Activated T-helper 1 cell treated with anti-CD3 and anti-CD28 coated beads, Interleukin-12 subunit alpha, Interleukin-12 subunit beta, Interleukin-2, Interleukin-4 antibody, amounts not matched to agents 30 ng/mL and 10 ng/mL and 1 ng/mL, durations not matched to agents 14 hours and 24 hours and 36 hours (primary cell): ENCODE measurements at regions of chr6 and their contacts with region 1.

Region 1: GRCh38 chr6:106444777-106445507 is 84.4 kb downstream of the CRYBG1 start:
- DNase-seq: peak; percentile 16
- H3K4me3 Mint-ChIP-seq: no peak overlapping the region
- H3K27ac Mint-ChIP-seq: no peak overlapping the region
- H3K4me1 Mint-ChIP-seq: peaks cover 20% of the 10 kb centered on the region
- H3K27me3 Mint-ChIP-seq: peaks cover 20% of the 10 kb centered on the region

Region 2: DNA sequence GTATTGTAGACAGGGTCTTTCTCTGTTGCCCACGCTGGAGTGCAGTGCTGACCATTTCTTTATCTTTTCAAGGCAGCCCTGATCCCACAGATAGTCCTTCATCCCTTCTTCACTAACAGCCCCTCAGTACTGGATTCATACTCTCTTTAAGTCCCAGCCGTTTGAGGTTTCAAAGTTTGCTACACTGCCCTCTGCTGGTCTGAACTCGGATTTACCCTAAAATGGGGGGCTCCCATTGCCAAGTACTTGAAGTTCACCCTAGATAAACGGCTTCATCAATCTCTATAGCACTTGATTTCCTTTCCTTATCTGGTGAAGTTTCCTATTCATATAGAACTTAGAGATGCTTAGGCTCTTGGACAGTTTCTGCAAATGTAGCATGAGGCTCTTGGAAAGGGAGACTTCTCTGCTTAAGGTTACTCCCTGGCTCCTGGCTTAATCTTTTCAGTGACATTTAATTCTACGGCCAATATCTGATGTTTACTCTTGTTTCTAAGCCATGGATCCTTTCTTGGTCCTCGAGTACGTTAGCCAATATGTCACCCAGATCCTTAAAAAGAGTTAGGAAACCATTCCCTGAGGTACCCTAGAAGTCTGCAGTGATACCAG is 1020.7 kb before region 1 on chr6:
- intact Hi-C with region 1: loop called (anchors 10 kb)
- DNase-seq: peak; percentile 48
- H3K4me3 Mint-ChIP-seq: no peak overlapping the region
- H3K27ac Mint-ChIP-seq: no peak overlapping the region
- H3K4me1 Mint-ChIP-seq: no peaks in the 10 kb centered on the region
- H3K27me3 Mint-ChIP-seq: peaks cover 5% of the 10 kb centered on the region

Region 3: DNA sequence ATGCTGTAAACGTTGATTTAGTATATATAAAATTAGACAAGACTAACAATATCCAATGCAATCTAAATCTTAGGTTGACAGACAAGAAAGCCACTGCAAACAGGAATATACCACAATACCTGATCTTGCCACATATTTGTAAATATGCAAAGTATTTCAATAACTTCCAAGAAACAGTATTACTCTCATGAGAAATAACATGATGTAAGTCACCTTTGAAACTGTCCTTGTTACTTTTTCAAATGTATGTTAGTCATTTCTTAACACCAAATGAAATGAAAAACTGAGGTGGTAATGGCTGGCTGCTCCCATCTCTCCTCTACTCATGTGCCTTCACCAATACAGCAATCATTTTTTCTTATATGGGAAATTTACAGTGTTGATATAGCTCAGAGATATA is 238.0 kb before region 1 on chr6:
- intact Hi-C with region 1: no loop called
- DNase-seq: no peak
- H3K4me3 Mint-ChIP-seq: no peak overlapping the region
- H3K27ac Mint-ChIP-seq: no peak overlapping the region
- H3K4me1 Mint-ChIP-seq: peaks cover 25% of the 10 kb centered on the region
- H3K27me3 Mint-ChIP-seq: no peaks in the 10 kb centered on the region

Region 4: DNA sequence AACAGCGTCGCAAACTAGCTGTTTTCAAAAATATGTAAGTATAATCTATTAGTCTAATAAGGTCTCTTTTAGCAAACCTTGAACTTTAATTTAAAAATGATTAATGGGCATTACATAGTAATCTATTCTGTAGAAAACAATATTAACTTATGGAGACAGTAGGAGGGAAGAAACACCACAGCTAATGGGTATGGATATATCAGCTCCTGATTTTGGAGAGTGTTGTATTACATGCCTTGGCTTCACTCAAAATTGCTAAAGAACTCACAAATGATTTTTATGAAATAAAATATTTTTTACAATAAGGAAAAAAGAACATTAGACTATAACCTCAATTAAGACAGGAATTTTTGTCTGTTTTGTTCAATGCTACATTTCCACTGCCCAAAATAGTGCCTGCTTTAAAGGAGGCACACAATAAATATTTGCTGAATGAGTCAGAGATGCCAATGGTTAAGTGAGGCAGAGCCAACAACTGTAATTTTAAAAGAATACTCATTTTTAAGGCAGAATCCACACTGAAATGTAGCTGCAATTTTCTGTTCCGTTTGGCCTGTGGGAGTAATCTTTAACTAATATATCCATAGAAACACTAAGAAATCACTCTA is 135.1 kb before region 1 on chr6:
- intact Hi-C with region 1: no loop called
- DNase-seq: no peak
- H3K4me3 Mint-ChIP-seq: no peak overlapping the region
- H3K27ac Mint-ChIP-seq: no peak overlapping the region
- H3K4me1 Mint-ChIP-seq: peaks cover 35% of the 10 kb centered on the region
- H3K27me3 Mint-ChIP-seq: no peaks in the 10 kb centered on the region

Region 5: DNA sequence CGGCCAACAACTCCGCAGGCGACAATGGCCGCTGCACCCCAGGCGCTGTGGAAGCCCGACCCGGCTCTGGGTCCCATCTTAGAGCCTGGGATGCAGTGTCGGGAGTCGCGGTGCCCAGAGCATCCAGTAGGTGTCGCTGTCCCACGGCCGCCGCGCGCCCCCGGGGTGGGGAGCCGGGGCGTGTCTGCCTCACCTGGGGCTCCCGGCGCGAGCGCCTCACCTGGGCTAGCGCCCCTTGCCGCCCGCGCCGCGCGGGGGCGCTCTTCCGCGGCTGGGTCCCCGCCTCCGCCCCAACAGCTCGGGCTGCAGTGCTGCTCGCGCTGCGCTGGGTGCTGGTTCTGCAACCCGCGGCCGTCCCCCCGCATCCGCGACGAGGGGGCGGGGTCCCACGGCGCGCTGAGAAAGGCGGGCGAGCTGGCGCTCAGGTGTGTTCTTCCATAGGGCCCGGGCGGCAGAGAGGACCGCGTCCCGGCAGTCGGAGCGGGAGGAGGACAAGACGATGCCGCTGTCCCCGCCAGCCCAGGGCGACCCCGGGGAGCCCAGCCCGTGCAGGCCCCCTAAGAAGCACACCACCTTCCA is 84.4 kb before region 1 on chr6 and contains the start of gene CRYBG1:
- intact Hi-C with region 1: loop called (anchors 5 kb)
- DNase-seq: peak; percentile 52
- H3K4me3 Mint-ChIP-seq: peak within 1 kb of the TSS; percentile 81
- H3K27ac Mint-ChIP-seq: no peak within 1 kb of the TSS
- H3K4me1 Mint-ChIP-seq: peaks cover 10% of the 10 kb centered on the region
- H3K27me3 Mint-ChIP-seq: peaks cover 61% of the 10 kb centered on the region
- total RNA-seq, gene CRYBG1: 10.2 and 11.4 TPM in 2 replicates

Region 6: DNA sequence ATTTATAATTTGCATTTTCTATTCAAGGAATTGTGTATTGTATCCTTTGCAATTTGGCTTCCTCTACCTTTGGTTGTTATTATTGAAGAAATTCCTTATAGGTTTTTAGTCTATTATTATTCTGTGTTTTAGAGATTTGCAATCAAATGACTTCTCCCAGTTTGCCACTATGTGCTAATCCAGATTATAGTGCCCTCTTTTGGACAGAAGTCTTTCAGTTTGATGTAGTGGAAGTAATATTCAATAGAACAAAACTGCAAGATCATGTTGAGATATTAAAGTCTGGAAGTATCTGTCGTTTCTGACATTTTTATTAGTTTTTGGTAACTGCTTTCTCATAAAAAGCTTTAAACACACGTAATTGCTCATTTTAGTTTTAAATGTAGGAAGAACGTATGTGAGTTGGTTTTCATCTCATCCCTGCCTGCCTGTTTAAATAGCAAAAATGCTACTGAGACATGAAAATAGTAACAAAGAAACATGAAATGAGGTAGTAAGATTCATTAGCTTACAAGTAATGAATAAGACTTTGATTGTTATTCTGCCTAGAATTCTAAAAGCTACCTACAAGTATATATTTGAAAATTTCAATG is 111.5 kb after region 1 on chr6:
- intact Hi-C with region 1: loop called (anchors 2 kb)
- DNase-seq: no peak
- H3K4me3 Mint-ChIP-seq: no peak overlapping the region
- H3K27ac Mint-ChIP-seq: no peak overlapping the region
- H3K4me1 Mint-ChIP-seq: peaks cover 23% of the 10 kb centered on the region
- H3K27me3 Mint-ChIP-seq: no peaks in the 10 kb centered on the region

Region 7: DNA sequence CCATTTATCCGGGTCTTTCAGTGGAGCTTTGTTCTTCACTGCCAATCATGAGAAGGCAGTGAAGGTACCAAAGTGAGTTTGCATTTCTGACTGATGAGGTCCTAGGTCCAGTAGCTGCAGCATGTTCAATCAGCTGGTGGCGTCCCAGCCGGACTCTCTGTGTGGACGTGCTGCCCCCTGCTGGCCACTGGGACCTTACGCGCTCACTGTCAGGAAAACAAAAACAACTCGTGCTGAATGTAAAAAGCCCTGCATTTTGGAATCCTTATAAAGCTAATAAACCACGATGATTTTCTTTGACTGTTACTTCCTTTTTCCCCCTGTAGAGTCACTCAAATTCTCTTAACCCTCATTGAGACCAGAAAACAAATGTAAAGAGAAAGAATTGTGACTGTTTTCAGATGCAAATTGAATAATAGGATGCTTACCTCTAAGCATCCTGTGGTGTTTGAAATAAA is 534.5 kb after region 1 on chr6:
- intact Hi-C with region 1: loop called (anchors 1 kb)
- DNase-seq: peak; percentile 60
- H3K4me3 Mint-ChIP-seq: no peak overlapping the region
- H3K27ac Mint-ChIP-seq: no peak overlapping the region
- H3K4me1 Mint-ChIP-seq: no peaks in the 10 kb centered on the region
- H3K27me3 Mint-ChIP-seq: peaks cover 30% of the 10 kb centered on the region